ENCODE measurements at regions of chr12 and their contacts with region 1.

Region 1: DNA sequence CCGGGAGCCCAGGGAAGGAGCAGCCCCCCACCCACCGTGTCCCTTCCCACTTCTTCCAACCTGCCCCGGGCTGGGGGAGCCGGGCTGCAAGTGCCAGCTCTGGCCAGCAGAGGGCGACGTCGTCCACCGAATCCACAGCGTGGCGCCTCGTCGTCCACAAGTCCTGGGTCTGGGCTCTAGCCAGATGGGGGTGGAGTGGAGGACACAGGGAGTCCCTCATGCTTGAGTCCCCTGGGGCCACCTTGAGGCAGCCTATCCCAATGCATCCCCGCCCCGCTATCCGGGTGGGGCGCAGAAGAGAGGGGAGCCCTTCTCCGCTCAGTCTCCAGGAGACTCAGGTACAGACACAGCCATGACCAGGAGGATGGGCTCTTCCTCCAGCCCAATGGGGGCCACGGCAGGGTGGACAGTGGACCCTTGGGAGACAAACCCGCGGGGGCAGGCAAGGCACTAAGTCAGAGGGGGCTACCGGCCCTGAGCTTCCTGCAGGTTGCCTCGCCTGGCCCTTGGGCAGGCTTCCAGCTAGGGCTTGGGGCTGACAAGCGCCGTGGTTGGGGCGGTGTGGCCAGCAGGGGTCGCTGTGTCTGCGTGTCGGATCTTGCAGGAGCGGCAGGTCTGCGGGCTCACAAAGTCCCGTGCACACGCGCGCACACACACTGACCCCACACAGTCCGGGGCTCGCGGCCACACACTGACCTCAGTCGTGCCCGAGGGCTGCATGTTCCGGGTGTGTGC is 5.5 kb downstream of the AQP5 start:
- DNase-seq: peak; percentile 88 to 93 (median 89)
- H3K4me3 ChIP-seq: peak overlapping the region; percentile 47 to 63
- H3K4me3 Mint-ChIP-seq: peak overlapping the region; percentile 51 to 85 (median 76)
- H3K27ac ChIP-seq: no peak overlapping the region
- H3K27ac Mint-ChIP-seq: peak overlapping the region in 2 of 7 donors; percentile 42 to 46
- H3K4me1 ChIP-seq: peaks cover 10% of the 10 kb centered on the region
- H3K4me1 Mint-ChIP-seq: peaks cover 1 to 11% (median 4%) of the 10 kb centered on the region in 4 donors
- H3K27me3 ChIP-seq: peaks cover 15% of the 10 kb centered on the region
- H3K27me3 Mint-ChIP-seq: peaks cover 20 to 39% of the 10 kb centered on the region in 2 donors

Region 2: DNA sequence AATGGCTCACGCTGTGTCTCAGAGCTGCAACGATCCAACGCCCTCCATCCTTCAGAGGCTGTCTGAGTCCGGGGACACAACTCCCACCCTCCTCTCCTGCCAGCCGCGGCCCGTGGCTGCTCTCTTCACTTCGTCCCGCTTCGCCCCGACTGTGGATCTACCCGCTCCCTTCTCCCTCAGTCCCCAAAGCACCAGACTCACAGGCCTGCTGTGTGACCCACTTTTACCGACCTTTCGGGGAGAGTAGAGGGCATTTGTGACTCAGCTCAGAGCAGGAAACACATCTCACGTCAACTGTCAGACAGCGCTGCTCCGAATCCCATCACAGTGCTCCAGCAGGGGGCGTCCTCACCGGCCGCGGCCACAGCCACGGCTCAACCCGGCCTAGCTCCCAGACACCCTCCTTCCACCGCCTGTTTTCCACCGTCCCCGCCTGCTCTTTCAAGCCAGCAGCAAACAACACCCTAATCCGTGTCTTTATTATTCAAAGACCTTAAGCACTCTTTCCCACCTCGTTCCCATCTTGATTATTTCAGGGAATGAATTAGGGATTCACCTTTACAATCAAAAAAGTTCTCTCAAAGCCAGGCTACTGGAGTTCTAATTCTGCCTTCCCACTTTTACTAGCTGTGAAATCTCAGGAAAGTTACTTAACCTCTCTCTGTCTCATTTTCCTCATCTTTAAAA is 21.7 kb before region 1 on chr12:
- CTCF ChIA-PET with region 1: interaction called, 44 read pairs
- POLR2A ChIA-PET with region 1: no interaction called
- intact Hi-C with region 1: no loop called
- DNase-seq: peak; percentile 66 to 80 (median 71)
- H3K4me3 ChIP-seq: peak overlapping the region in 1 of 2 donors; percentile 12
- H3K4me3 Mint-ChIP-seq: peak overlapping the region; percentile 84 to 96 (median 89)
- H3K27ac ChIP-seq: peak overlapping the region; percentile 29
- H3K27ac Mint-ChIP-seq: peak overlapping the region; percentile 76 to 94 (median 89)
- H3K4me1 ChIP-seq: peaks cover 40% of the 10 kb centered on the region
- H3K4me1 Mint-ChIP-seq: peaks cover 16 to 54% (median 23%) of the 10 kb centered on the region in 4 donors
- H3K27me3 ChIP-seq: no peaks in the 10 kb centered on the region
- H3K27me3 Mint-ChIP-seq: peaks cover 0 to 3% of the 10 kb centered on the region in 2 donors

Region 3: GRCh38 chr12:50041062-50041860 is 74.1 kb after region 1 on chr12:
- CTCF ChIA-PET with region 1: interaction called, 19 read pairs
- POLR2A ChIA-PET with region 1: no interaction called
- intact Hi-C with region 1: no loop called
- DNase-seq: no peak
- H3K4me3 ChIP-seq: no peak overlapping the region
- H3K4me3 Mint-ChIP-seq: no peak overlapping the region
- H3K27ac ChIP-seq: no peak overlapping the region
- H3K27ac Mint-ChIP-seq: no peak overlapping the region
- H3K4me1 ChIP-seq: no peaks in the 10 kb centered on the region
- H3K4me1 Mint-ChIP-seq: peaks cover 0 to 1% (median 0%) of the 10 kb centered on the region in 4 donors
- H3K27me3 ChIP-seq: no peaks in the 10 kb centered on the region
- H3K27me3 Mint-ChIP-seq: peaks cover 2 to 4% of the 10 kb centered on the region in 2 donors

Region 4: DNA sequence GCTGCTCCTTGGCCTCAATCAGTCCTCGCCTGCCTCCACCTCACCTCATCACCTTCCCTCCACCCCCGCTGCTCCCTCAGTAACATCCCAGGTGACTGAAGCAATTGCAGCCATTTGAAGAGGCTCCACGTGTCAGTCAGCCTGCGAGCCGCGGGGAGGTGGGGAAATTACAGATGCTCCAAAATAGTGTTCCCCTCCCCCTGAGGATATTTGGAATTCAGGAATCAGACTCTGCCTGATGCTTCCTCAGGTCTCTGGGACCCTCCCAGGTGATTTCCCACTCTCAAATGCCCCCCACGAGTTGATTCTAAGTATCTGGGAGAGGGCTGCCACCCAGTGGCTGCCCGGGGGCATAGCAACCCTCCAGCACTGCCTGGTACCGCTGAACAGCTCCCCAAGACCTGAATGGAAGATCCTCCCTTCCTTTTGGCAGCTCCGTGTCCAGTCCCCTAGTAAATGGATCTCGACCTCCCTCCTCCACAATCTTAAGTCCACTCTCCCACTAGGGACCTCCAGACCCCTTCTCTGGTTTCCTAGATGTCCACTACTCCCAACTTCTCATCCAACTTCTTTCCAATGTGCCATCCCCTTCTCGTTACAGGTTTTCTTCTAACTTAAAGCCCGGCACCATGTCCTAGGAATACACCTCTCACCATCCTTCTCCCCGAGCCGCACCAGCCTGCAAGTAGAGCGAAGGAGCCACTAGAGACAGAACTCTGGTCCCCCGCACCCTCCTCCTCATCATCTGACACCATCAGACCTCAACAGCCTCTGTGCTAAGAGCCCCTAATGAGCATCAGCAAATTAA is 88.8 kb after region 1 on chr12:
- CTCF ChIA-PET with region 1: interaction called, 75 read pairs
- POLR2A ChIA-PET with region 1: interaction called, 6 read pairs
- intact Hi-C with region 1: no loop called
- DNase-seq: peak; percentile 51 to 60 (median 54)
- H3K4me3 ChIP-seq: peak overlapping the region in 1 of 2 donors; percentile 15
- H3K4me3 Mint-ChIP-seq: peak overlapping the region; percentile 43 to 94 (median 77)
- H3K27ac ChIP-seq: no peak overlapping the region
- H3K27ac Mint-ChIP-seq: no peak overlapping the region
- H3K4me1 ChIP-seq: peaks cover 24% of the 10 kb centered on the region
- H3K4me1 Mint-ChIP-seq: peaks cover 17 to 35% (median 24%) of the 10 kb centered on the region in 4 donors
- H3K27me3 ChIP-seq: peaks cover 22% of the 10 kb centered on the region
- H3K27me3 Mint-ChIP-seq: peaks cover 45 to 61% of the 10 kb centered on the region in 2 donors

Region 5: DNA sequence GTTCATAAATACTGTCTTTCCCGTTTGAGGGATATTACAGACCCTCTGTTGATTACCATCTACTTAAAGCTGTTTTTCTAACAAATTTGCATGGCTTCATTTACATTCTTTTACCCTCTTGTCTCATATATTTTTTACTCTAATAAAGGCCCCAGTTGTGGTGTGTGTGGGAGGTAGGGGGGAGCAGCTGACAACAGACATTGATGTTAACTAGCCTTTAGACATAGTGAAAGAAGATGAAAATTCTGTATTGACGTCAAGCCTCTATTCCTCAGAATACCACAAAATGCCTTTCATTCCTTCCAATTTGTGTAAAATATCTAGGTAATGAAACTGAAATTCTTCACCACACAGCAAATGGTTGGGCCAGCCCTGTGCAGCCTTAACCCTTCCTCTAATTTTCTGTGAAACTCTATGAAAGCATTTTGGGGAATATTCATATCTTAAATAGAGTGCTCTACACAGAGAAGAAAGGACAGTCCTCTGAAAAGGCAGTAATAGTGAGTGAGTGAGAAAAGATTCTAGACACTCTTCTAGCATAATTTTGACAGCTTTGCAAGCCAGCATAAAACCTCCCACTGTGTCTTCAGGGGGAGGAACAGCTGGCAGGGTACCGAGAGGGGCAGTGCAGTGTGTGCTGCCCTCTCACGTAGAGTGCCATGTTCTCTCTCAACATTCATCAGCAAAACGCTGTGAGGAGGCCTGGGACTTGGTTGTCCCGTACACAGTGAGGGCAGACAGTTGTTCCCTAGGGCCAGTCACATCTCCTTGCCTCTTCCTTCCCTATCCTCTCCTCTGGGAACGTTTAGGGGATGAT is 220.1 kb after region 1 on chr12:
- CTCF ChIA-PET with region 1: no interaction called
- POLR2A ChIA-PET with region 1: no interaction called
- intact Hi-C with region 1: loop called (anchors 10 kb)
- DNase-seq: no peak
- H3K4me3 ChIP-seq: no peak overlapping the region
- H3K4me3 Mint-ChIP-seq: no peak overlapping the region
- H3K27ac ChIP-seq: no peak overlapping the region
- H3K27ac Mint-ChIP-seq: peak overlapping the region in 6 of 7 donors; percentile 14 to 80 (median 54)
- H3K4me1 ChIP-seq: peaks cover 38% of the 10 kb centered on the region
- H3K4me1 Mint-ChIP-seq: peaks cover 14 to 41% (median 23%) of the 10 kb centered on the region in 4 donors
- H3K27me3 ChIP-seq: no peaks in the 10 kb centered on the region
- H3K27me3 Mint-ChIP-seq: no peaks in the 10 kb centered on the region

Measured in CD4-positive, alpha-beta memory T cell (primary cell).